ENCODE measurements at regions of chr10 and their contacts with region 1.

Region 1: DNA sequence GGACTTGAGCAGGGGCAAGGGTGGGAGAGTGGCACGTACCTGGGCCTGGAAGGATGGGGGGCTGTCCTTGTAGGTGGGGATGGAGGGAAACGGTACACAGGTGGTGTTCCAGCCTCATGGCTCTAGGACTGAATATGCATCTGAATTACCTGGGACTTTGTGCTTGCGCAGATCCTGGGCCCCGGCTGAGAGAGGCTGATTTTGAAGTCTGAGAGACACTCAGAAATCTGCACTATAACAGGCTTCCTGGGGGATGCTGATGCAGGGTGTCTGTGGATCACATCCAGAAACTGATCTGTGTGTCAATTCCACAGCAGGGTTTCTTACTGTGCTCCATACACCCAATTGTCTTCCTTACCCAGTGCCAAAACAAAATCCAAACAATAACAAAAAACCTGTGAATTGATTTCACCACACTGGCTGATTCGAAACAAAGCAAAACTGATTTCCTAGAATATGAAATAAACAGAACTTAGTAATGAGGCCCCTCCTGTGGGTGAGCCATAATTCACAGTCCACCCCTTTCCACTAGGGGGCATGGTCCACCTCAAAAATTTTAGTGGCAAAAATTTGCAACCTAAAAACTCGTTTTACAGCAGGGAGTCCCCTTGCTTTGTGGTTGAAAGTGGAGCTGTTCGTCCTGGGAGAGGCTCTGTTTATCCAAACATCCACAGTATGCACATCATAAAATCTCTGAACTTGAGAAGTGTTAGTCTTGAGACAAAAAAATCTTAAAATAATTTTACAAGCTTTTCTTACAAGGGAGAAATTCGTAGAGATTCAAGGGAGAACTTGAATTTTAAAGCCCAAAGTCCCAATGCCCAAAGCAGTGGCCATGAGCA is 32.0 kb upstream of the PLEKHA1 start:
- DNase-seq: peak; percentile 73
- ATAC-seq: peak; percentile 71
- H3K4me3 ChIP-seq: no peak overlapping the region
- H3K27ac ChIP-seq: no peak overlapping the region
- H3K4me1 ChIP-seq: no peaks in the 10 kb centered on the region; the same call in 1 of the 2 replicates
- H3K27me3 ChIP-seq: no peaks in the 10 kb centered on the region
- CTCF ChIP-seq: peak; percentile 81

Region 2: GRCh38 chr10:122221958-122222357 is 120.6 kb before region 1 on chr10:
- CTCF ChIA-PET with region 1: no interaction called
- POLR2A ChIA-PET with region 1: no interaction called
- intact Hi-C with region 1: no loop called
- DNase-seq: no peak
- ATAC-seq: no peak
- H3K4me3 ChIP-seq: no peak overlapping the region
- H3K27ac ChIP-seq: no peak overlapping the region
- H3K4me1 ChIP-seq: no peaks in the 10 kb centered on the region
- H3K27me3 ChIP-seq: no peaks in the 10 kb centered on the region
- CTCF ChIP-seq: no peak

Region 3: GRCh38 chr10:122374237-122374869 is 31.8 kb after region 1 on chr10 and contains the start of gene PLEKHA1:
- CTCF ChIA-PET with region 1: interaction called, 11 read pairs
- POLR2A ChIA-PET with region 1: no interaction called
- intact Hi-C with region 1: loop called (anchors 2 kb)
- DNase-seq: peak; percentile 93
- ATAC-seq: peak; percentile 91
- H3K4me3 ChIP-seq: peak within 1 kb of the TSS; percentile 95
- H3K27ac ChIP-seq: peak within 1 kb of the TSS; percentile 16; the same call in 1 of the 2 replicates
- H3K4me1 ChIP-seq: peaks cover 16% of the 10 kb centered on the region; the same call in 1 of the 2 replicates
- H3K27me3 ChIP-seq: no peaks in the 10 kb centered on the region
- CTCF ChIP-seq: no peak
- total RNA-seq, gene PLEKHA1: 5.2 and 7.7 TPM in 2 replicates

Region 4: DNA sequence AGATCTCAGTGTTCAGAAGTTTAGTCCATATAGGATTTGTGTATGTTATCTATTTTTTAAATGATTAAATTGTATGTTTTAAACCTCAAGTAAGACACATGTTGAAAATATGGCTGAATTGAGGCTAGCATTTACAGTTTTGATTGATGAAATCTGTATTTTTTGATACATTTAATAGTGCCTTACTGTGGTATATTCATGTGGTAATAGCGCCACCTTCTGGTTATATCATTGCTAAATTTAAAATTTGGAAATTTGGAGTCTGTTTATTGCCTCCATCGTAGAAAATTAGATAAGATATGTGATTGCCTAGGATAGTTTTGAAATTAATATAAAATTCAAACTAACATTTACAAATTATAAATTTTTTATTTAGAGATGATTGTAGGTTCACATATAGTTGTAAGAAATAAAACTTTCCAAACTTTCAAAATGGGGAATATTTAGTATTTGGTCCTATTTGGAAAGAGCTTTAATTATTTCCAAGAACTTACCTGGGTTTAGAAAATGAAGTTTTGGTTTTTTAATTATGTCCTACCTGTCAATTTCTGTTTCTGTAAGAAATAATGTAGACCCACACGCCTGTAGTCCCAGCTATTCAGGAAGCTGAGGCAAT is 92.8 kb after region 1 on chr10:
- CTCF ChIA-PET with region 1: interaction called, 3 read pairs
- POLR2A ChIA-PET with region 1: no interaction called
- intact Hi-C with region 1: loop called (anchors 1 kb)
- DNase-seq: peak; percentile 75
- ATAC-seq: peak; percentile 22; the same call in 1 of the 2 replicates
- H3K4me3 ChIP-seq: no peak overlapping the region
- H3K27ac ChIP-seq: no peak overlapping the region
- H3K4me1 ChIP-seq: no peaks in the 10 kb centered on the region
- H3K27me3 ChIP-seq: no peaks in the 10 kb centered on the region
- CTCF ChIP-seq: peak; percentile 72